CD4-positive, alpha-beta T cell (primary cell): ENCODE measurements at regions of chr9 and their contacts with region 1.

Region 1: GRCh38 chr9:114366334-114367128 is 21.3 kb downstream of the AKNA start:
- DNase-seq: peak in 7 of 14 experiments; percentile 29 to 77 (median 67)
- ATAC-seq: peak; percentile 81
- H3K4me3 ChIP-seq: no peak overlapping the region
- H3K4me3 Mint-ChIP-seq: peak overlapping the region; percentile 78
- H3K27ac ChIP-seq: peak overlapping the region; percentile 77 to 81
- H3K27ac Mint-ChIP-seq: peak overlapping the region; percentile 83
- H3K4me1 ChIP-seq: peaks cover 96% of the 10 kb centered on the region
- H3K4me1 Mint-ChIP-seq: peaks cover 91% of the 10 kb centered on the region
- H3K27me3 ChIP-seq: no peaks in the 10 kb centered on the region
- H3K27me3 Mint-ChIP-seq: no peaks in the 10 kb centered on the region
- CTCF ChIP-seq: no peak

Region 2: DNA sequence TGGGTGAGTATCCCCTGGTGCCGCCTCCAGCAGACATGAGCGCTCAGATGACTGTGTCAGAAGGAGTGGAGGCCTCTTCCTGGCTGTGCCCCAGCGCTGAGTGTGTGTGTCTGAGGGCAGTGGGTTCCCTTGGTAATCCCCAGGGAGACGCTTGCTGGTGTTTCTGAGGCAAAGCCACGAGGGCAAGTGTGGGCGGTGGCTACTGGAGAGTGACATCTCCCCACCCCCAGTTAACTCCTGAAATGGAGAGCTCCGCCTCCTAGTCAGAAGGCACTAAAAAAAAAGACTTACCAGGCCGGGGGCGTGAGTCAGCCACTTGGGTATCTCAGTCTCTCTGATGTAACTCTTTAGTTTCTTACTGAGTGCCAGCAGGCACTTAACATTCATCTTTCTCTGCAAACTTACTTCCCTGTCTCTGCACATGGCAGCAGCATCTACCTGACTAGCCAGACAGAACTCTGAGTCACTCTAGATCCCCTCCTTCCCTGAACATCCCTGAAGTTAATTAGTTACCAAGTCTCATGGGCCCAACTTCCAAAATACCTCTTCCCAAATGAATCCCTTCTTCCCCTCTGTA is 17.5 kb before region 1 on chr9:
- CTCF ChIA-PET with region 1: interaction called, 4 read pairs
- POLR2A ChIA-PET with region 1: interaction called, 17 read pairs
- intact Hi-C with region 1: loop called in 1 of 2 experiments (anchors 2 kb)
- DNase-seq: peak in 11 of 14 experiments; percentile 27 to 83 (median 58)
- ATAC-seq: peak; percentile 85
- H3K4me3 ChIP-seq: no peak overlapping the region
- H3K4me3 Mint-ChIP-seq: peak overlapping the region; percentile 36
- H3K27ac ChIP-seq: peak overlapping the region; percentile 61 to 66
- H3K27ac Mint-ChIP-seq: peak overlapping the region; percentile 92
- H3K4me1 ChIP-seq: peaks cover 40% of the 10 kb centered on the region
- H3K4me1 Mint-ChIP-seq: peaks cover 59% of the 10 kb centered on the region
- H3K27me3 ChIP-seq: no peaks in the 10 kb centered on the region
- H3K27me3 Mint-ChIP-seq: no peaks in the 10 kb centered on the region
- CTCF ChIP-seq: no peak

Region 3: DNA sequence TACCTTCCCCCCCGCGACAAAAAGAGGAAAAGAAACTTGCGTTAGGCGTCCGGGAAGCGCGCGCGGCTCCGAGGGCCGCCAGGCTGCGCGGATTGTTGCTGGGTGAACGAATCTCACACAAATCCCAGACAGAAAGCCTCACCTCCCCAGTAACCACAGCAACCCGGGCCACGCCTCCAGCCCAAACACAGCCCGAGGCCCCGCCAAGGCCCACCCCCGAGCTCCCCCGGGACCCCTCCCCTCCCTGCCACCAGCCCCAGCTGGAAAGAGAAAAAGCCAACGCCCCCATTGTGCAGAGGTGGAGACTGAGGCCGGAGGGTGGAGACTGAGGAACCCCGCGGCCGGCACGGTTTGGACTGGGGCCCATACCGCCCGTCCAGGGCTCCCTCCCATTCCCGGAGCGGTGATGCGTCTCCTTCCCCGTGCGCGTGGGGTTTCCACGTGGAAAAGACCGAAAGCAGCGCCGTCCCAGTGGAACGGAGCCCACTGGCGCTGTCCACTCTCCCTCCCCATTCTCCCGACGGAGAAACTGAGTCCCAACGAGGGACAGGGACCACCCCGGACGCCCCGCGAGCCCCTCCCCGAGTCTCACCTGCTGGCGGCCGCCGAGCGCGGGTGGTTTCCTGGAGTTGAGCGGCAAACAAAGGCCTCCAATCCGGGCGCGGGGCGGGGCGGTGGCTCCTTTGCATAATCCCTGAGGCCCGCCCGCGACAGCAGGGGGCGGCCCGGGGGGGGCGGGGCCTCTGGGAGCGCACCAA is 31.5 kb after region 1 on chr9:
- CTCF ChIA-PET with region 1: interaction called, 5 read pairs
- POLR2A ChIA-PET with region 1: interaction called, 45 read pairs
- intact Hi-C with region 1: loop called in 1 of 2 experiments (anchors 5 kb)
- DNase-seq: peak; percentile 90 to 98 (median 96)
- ATAC-seq: peak; percentile 84
- H3K4me3 ChIP-seq: peak overlapping the region; percentile 99
- H3K4me3 Mint-ChIP-seq: peak overlapping the region; percentile 97
- H3K27ac ChIP-seq: peak overlapping the region; percentile 93 to 94
- H3K27ac Mint-ChIP-seq: peak overlapping the region; percentile 98
- H3K4me1 ChIP-seq: peaks cover 53% of the 10 kb centered on the region
- H3K4me1 Mint-ChIP-seq: peaks cover 45% of the 10 kb centered on the region
- H3K27me3 ChIP-seq: no peaks in the 10 kb centered on the region
- H3K27me3 Mint-ChIP-seq: no peaks in the 10 kb centered on the region
- CTCF ChIP-seq: no peak